ENCODE measurements at regions of chr2 and their contacts with region 1.

Region 1: GRCh38 chr2:6896930-6897759 is 19.6 kb downstream of the RSAD2 start:
- DNase-seq: no peak
- ATAC-seq: peak; percentile 64
- H3K4me3 ChIP-seq: no peak overlapping the region
- H3K27ac ChIP-seq: no peak overlapping the region
- H3K4me1 ChIP-seq: no peaks in the 10 kb centered on the region
- H3K27me3 ChIP-seq: no peaks in the 10 kb centered on the region
- CTCF ChIP-seq: peak; percentile 50 to 81 (median 68); a peak in 5 of 6 replicates
- EP300 ChIP-seq: no peak
- POLR2A ChIP-seq: no peak
- RAD21 ChIP-seq: peak; percentile 89

Region 2: GRCh38 chr2:6826081-6826913 is 70.8 kb before region 1 on chr2:
- CTCF ChIA-PET with region 1: interaction called, 19 read pairs
- POLR2A ChIA-PET with region 1: no interaction called
- RAD21 ChIA-PET with region 1: interaction called, 3 read pairs
- SMC1A ChIA-PET with region 1: interaction called, 3 read pairs
- in situ Hi-C with region 1: no loop called
- intact Hi-C with region 1: no loop called
- DNase-seq: peak; percentile 58
- ATAC-seq: peak; percentile 97
- H3K4me3 ChIP-seq: no peak overlapping the region
- H3K27ac ChIP-seq: no peak overlapping the region
- H3K4me1 ChIP-seq: no peaks in the 10 kb centered on the region
- H3K27me3 ChIP-seq: no peaks in the 10 kb centered on the region
- CTCF ChIP-seq: peak; percentile 67 to 86 (median 70)
- EP300 ChIP-seq: peak in 1 of 2 experiments; percentile 19; a peak in 1 of 4 replicates
- POLR2A ChIP-seq: no peak
- RAD21 ChIP-seq: peak; percentile 74

Region 3: DNA sequence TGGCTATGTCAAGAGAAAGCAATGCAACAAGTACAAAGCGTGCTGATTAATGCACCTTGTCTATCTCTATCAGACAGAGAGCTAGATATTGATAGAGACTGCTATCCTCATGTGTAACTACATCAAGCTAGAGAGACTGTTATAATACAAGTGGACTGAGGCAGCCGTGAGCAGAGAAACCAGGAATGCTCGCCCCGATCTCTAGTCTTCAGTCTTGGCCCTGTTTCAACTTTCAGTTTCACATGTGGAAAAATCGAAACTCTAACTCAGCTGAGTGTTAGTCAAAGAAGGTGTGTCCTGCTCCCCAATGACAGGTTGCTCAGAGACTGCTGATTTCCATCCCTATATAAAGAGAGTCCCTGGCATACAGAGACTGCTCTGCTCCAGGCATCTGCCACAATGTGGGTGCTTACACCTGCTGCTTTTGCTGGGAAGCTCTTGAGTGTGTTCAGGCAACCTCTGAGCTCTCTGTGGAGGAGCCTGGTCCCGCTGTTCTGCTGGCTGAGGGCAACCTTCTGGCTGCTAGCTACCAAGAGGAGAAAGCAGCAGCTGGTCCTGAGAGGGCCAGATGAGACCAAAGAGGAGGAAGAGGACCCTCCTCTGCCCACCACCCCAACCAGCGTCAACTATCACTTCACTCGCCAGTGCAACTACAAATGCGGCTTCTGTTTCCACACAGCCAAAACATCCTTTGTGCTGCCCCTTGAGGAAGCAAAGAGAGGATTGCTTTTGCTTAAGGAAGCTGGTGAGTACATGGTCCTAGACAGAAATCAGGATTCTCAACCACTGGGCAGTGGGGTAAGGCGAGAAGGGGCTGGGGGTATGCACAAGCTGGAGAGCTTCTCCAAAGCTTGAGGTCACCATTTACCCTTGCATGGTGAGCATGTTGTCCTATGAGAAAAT is 19.5 kb before region 1 on chr2 and contains the start of gene RSAD2:
- CTCF ChIA-PET with region 1: interaction called, 16 read pairs
- POLR2A ChIA-PET with region 1: no interaction called
- RAD21 ChIA-PET with region 1: interaction called, 6 read pairs
- SMC1A ChIA-PET with region 1: interaction called, 3 read pairs
- in situ Hi-C with region 1: no loop called
- intact Hi-C with region 1: no loop called
- DNase-seq: peak; percentile 15
- ATAC-seq: peak; percentile 84
- H3K4me3 ChIP-seq: peak within 1 kb of the TSS; percentile 39; the same call in 1 of the 2 replicates
- H3K27ac ChIP-seq: no peak within 1 kb of the TSS
- H3K4me1 ChIP-seq: peaks cover 13% of the 10 kb centered on the region
- H3K27me3 ChIP-seq: peaks cover 0 to 2% of the 10 kb centered on the region in 2 experiments; a peak in 1 of 4 replicates
- CTCF ChIP-seq: no peak
- EP300 ChIP-seq: no peak
- POLR2A ChIP-seq: no peak
- RAD21 ChIP-seq: no peak
- polyA plus RNA-seq, gene RSAD2: 0.40 to 0.56 TPM

Region 4: DNA sequence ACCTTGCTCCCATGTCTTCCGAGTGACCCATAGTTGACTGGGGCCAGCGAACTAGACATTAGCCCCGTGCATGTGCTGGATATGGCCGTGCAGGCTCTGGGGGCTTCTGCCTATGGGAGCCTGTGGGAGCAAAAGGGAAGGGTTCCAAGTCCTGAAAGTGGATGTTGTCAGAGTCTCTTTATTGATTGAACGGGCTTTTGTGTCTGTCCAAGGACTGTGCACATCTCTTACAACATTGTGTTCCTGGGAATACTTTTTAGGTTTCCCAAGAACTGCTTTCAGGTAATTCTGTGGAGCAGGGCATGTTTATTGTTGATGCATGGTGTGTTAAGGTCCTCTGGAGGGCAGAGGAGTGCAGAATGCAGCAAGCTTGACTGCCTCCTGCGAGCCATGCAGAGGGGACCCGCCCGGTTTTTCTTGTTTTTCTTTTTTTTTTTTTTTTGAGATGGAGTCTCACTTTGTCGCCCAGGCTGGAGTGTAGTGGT is 25.1 kb after region 1 on chr2:
- CTCF ChIA-PET with region 1: interaction called, 52 read pairs
- POLR2A ChIA-PET with region 1: no interaction called
- RAD21 ChIA-PET with region 1: interaction called, 19 read pairs
- SMC1A ChIA-PET with region 1: interaction called, 26 read pairs
- in situ Hi-C with region 1: no loop called
- intact Hi-C with region 1: loop called (anchors 1 kb)
- DNase-seq: no peak
- ATAC-seq: peak; percentile 23; the same call in 2 of the 3 replicates
- H3K4me3 ChIP-seq: no peak overlapping the region
- H3K27ac ChIP-seq: no peak overlapping the region
- H3K4me1 ChIP-seq: 0 out of 2 replicates have a peak, but pooled peaks cover 5% of the 10 kb centered on the region
- H3K27me3 ChIP-seq: no peaks in the 10 kb centered on the region
- CTCF ChIP-seq: peak in 2 of 3 experiments; percentile 22 to 25; a peak in 3 of 6 replicates
- EP300 ChIP-seq: no peak
- POLR2A ChIP-seq: no peak
- RAD21 ChIP-seq: 0 out of 2 replicates have a peak, but pooled peaks have one; percentile 26

Region 5: GRCh38 chr2:7014174-7014640 is 117.1 kb after region 1 on chr2:
- CTCF ChIA-PET with region 1: interaction called, 107 read pairs
- POLR2A ChIA-PET with region 1: no interaction called
- RAD21 ChIA-PET with region 1: interaction called, 32 read pairs
- SMC1A ChIA-PET with region 1: interaction called, 56 read pairs
- in situ Hi-C with region 1: no loop called
- intact Hi-C with region 1: loop called (anchors 5 kb)
- DNase-seq: no peak
- ATAC-seq: peak; percentile 86
- H3K4me3 ChIP-seq: no peak overlapping the region
- H3K27ac ChIP-seq: no peak overlapping the region
- H3K4me1 ChIP-seq: no peaks in the 10 kb centered on the region
- H3K27me3 ChIP-seq: no peaks in the 10 kb centered on the region; a peak in 1 of 4 replicates
- CTCF ChIP-seq: peak; percentile 37 to 61 (median 58); a peak in 5 of 6 replicates
- EP300 ChIP-seq: no peak
- POLR2A ChIP-seq: no peak
- RAD21 ChIP-seq: peak; percentile 42

Region 6: GRCh38 chr2:7044261-7045250 is 147.4 kb after region 1 on chr2:
- CTCF ChIA-PET with region 1: interaction called, 127 read pairs
- POLR2A ChIA-PET with region 1: interaction called, 3 read pairs
- RAD21 ChIA-PET with region 1: interaction called, 40 read pairs
- SMC1A ChIA-PET with region 1: interaction called, 73 read pairs
- in situ Hi-C with region 1: no loop called
- intact Hi-C with region 1: loop called (anchors 1 kb)
- DNase-seq: peak; percentile 16
- ATAC-seq: peak; percentile 84
- H3K4me3 ChIP-seq: no peak overlapping the region
- H3K27ac ChIP-seq: no peak overlapping the region
- H3K4me1 ChIP-seq: no peaks in the 10 kb centered on the region
- H3K27me3 ChIP-seq: no peaks in the 10 kb centered on the region
- CTCF ChIP-seq: peak; percentile 89 to 98 (median 98); a peak in 5 of 6 replicates
- EP300 ChIP-seq: no peak
- POLR2A ChIP-seq: no peak
- RAD21 ChIP-seq: peak; percentile 73

Measured in GM12878 (cell line).